SK-N-SH (cell line): ENCODE measurements at regions of chr12 and their contacts with region 1.

Region 1: DNA sequence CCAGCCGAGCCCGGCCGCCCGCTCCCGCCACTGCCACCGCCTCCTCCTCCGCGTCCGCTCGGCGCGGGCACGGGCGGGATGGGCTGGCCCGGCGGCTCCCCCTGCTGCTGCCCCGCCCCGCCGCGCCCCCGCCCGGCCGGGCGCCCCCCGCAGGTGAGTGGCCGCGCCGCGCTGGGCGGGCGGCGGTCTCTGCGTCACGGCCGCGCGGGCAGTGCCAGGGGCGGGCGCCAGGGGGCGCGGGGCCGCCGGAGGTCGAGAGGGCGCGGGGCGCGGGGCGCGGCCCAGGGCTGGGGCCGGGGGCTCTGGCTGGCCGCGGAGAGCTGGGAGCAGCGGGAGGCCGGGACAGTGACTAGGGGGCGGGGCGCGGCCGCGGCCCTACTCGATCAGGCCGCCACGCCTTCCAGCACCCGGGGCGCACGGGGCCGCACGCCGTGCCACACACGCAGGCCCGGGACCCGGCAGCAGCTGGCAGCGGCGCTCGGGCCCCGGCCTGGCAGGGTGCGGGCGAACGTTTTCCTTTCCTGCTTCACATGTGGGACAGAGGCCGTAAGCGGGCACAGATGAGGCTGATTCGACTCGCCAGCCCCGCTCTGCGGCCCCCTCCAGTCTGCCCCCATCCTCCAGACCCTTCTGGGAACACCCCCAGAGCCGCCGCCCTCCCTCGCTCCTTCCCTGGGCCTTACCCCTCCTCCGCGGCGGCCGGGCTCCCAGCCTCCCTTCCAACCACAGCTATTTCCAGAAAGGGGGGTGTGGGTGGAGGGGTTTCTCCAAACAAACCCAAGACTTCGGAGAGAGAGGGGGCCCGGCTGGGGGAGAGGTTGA is 2.4 kb upstream of the TNS2 start:
- DNase-seq: peak; percentile 95
- H3K4me3 ChIP-seq: peak overlapping the region; percentile 73 to 75
- H3K27ac ChIP-seq: peak overlapping the region; percentile 95 to 98
- H3K4me1 ChIP-seq: peaks cover 29 to 63% of the 10 kb centered on the region in 2 experiments
- H3K27me3 ChIP-seq: no peaks in the 10 kb centered on the region
- CTCF ChIP-seq: no peak
- EP300 ChIP-seq: peak in 1 of 2 experiments; percentile 53; a peak in 1 of 4 replicates
- RAD21 ChIP-seq: no peak

Region 2: GRCh38 chr12:52992699-52993557 is 54.5 kb before region 1 on chr12:
- CTCF ChIA-PET with region 1: no interaction called
- POLR2A ChIA-PET with region 1: no interaction called
- DNase-seq: no peak
- H3K4me3 ChIP-seq: no peak overlapping the region
- H3K27ac ChIP-seq: no peak overlapping the region
- H3K4me1 ChIP-seq: no peaks in the 10 kb centered on the region
- H3K27me3 ChIP-seq: no peaks in the 10 kb centered on the region
- CTCF ChIP-seq: no peak
- EP300 ChIP-seq: no peak
- RAD21 ChIP-seq: no peak

Region 3: DNA sequence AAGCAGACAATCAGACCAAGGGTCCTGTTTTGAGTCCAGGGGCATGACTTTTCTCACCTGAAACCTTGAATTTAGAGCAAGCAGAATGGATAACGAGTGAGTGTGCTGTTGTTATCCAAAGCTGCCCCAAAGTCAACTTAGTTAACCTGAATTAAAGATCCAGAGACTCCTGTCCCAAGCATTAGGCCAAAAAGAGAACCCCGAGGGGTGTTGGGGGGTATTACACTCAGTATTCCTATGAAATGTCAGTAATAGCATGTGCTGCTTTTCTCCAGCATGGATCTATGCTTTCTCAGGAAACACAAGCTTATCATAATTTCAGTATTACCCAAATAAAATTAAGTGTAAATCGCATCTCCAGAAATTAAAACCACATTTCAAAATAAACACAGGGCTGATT is 22.2 kb before region 1 on chr12:
- CTCF ChIA-PET with region 1: interaction called, 13 read pairs
- POLR2A ChIA-PET with region 1: no interaction called
- DNase-seq: peak; percentile 26
- H3K4me3 ChIP-seq: no peak overlapping the region
- H3K27ac ChIP-seq: no peak overlapping the region
- H3K4me1 ChIP-seq: peaks cover 0 to 2% of the 10 kb centered on the region in 2 experiments; a peak in 1 of 4 replicates
- H3K27me3 ChIP-seq: no peaks in the 10 kb centered on the region
- CTCF ChIP-seq: no peak; the same call in 1 of the 2 replicates
- EP300 ChIP-seq: no peak
- RAD21 ChIP-seq: no peak

Region 4: DNA sequence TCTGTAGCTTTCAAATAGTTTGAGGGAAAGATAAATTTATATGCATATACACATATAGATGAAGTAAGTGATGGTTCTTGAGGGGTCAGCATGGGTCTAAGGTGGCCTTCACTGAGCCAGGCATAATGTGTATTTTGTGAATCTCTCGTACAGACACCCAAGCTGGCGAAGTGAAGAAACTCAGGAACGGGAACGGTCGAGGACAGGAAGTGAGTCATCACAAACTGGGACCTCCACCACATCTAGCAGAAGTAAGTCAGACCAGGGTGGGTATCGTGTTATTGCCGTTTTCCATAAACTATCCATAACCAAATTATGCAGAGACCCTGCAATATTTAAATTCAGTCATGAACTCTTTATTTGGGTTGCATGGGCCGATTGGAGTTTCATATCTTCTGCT is 13.0 kb before region 1 on chr12:
- CTCF ChIA-PET with region 1: interaction called, 47 read pairs
- POLR2A ChIA-PET with region 1: no interaction called
- DNase-seq: no peak
- H3K4me3 ChIP-seq: no peak overlapping the region
- H3K27ac ChIP-seq: peak overlapping the region in 1 of 2 experiments; percentile 18; a peak in 1 of 4 replicates
- H3K4me1 ChIP-seq: no peaks in the 10 kb centered on the region
- H3K27me3 ChIP-seq: no peaks in the 10 kb centered on the region
- CTCF ChIP-seq: no peak
- EP300 ChIP-seq: no peak
- RAD21 ChIP-seq: no peak

Region 5: DNA sequence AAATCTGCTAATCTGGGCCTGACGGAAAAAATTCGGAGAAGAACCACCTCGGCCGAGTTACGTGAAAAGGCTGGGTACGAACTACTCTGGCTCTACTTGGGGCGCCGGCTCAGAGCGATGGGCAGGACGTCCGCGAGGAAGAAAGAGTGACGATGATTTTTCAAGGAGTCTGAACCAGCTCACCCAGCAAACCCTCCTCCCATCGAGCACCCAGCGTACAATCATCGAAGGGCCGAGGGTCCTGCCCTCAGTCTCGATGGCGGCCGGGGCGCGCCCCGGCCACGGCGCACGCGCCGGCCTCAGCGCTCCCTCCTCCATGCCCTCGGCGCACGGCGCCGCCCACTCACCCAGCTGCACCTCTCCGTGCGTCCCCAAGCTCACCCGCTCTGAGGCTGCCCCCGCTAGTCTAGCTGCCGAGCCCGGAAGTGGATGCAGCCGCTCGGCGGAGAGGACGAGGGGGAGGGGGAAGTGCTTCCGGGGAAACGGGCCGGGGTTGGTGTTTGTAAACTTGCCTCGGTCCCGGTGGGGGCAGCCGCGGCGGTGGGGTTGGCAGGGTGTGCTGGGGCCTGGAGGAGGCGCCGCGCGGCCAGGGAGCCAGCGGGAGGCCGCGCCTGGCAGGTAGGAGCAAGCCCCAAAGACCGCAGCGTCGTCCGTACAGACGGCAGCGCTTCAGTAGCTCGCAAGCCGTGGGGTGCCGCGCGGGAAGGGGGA is 132.9 kb after region 1 on chr12 and contains the starts of genes CSAD and ZNF740:
- CTCF ChIA-PET with region 1: no interaction called
- POLR2A ChIA-PET with region 1: no interaction called
- DNase-seq: peak; percentile 98
- H3K4me3 ChIP-seq: peak within 1 kb of the TSS; percentile 77 to 78
- H3K27ac ChIP-seq: peak within 1 kb of the TSS; percentile 89 to 97
- H3K4me1 ChIP-seq: peaks cover 17 to 27% of the 10 kb centered on the region in 2 experiments; a peak in 3 of 4 replicates
- H3K27me3 ChIP-seq: no peaks in the 10 kb centered on the region
- CTCF ChIP-seq: no peak
- EP300 ChIP-seq: 0 out of 4 replicates have a peak, but pooled peaks of 1 of the 2 experiments have one; percentile 6
- RAD21 ChIP-seq: no peak
- polyA plus RNA-seq, gene CSAD: 32.2 and 45.4 TPM in 2 replicates
- polyA plus RNA-seq, gene ZNF740: 14.6 and 21.8 TPM in 2 replicates